GM18951 (cell line): ENCODE measurements at regions of chr15 and their contacts with region 1.

Region 1: GRCh38 chr15:50452927-50453326 is 28.7 kb downstream of the USP8 start:
- POLR2A ChIP-seq: no peak

Region 2: GRCh38 chr15:50354838-50355618 is 97.9 kb before region 1 on chr15 and contains the start of gene GABPB1:
- in situ Hi-C with region 1: loop called (anchors 10 kb)
- POLR2A ChIP-seq: peak; percentile 88